Gastrocnemius medialis (tissue), 4 donors: ENCODE measurements at regions of chr6 and their contacts with region 1.

Region 1: DNA sequence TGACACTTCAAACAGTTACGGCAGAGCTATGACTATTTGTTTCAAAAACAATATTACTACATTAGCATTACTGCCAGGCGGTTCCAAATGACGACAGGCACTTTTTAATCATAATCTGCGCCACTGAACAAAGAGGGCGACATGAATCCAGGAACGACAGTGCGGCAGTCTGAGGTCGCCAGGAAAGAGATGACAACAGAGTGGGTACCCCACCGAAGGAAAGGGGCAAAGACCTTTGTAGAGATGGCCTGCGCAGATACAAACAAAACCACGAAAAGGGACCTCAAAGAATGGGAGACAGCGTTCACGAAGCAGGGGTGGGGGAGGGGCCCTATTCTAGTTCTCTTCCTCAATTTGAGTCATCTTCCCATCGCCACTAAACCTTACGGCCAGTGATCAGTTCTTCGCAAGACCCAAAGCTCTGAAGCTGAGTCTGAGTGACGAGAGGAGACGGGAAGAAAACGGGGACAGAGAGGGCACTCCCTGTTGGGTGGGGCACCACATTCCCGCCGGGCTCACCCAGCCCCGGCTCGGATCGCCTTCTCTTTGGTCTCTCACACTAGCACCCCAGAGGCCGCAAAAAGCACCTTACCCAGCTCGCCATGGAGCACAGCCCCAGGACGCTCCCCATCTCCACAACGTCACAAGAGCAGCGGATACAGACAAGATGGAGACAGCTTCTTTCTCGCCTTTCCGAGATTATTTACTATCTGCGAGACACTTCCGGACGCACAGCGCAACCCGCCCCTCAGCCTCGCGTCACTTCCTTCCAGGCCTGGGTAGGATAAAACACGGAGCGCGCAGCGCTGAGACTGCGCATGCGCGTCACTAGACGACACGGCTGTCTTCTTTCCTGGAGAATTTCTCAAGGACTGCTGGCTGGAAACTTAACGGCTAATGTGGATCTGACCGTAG is at the start of gene SERINC1:
- DNase-seq: peak; percentile 93 to 95
- ATAC-seq: peak; percentile 97
- H3K4me3 ChIP-seq: peak within 1 kb of the TSS; percentile 79 to 99 (median 90)
- H3K27ac ChIP-seq: peak within 1 kb of the TSS; percentile 94 to 99 (median 97)
- H3K4me1 ChIP-seq: peaks cover 33 to 47% of the 10 kb centered on the region in 2 donors
- H3K27me3 ChIP-seq: no peaks in the 10 kb centered on the region
- CTCF ChIP-seq: peak in 1 of 5 experiments; percentile 7
- POLR2A ChIP-seq: peak; percentile 86 to 91
- total RNA-seq, gene SERINC1: 161 to 273 (median 198) TPM

Region 2: DNA sequence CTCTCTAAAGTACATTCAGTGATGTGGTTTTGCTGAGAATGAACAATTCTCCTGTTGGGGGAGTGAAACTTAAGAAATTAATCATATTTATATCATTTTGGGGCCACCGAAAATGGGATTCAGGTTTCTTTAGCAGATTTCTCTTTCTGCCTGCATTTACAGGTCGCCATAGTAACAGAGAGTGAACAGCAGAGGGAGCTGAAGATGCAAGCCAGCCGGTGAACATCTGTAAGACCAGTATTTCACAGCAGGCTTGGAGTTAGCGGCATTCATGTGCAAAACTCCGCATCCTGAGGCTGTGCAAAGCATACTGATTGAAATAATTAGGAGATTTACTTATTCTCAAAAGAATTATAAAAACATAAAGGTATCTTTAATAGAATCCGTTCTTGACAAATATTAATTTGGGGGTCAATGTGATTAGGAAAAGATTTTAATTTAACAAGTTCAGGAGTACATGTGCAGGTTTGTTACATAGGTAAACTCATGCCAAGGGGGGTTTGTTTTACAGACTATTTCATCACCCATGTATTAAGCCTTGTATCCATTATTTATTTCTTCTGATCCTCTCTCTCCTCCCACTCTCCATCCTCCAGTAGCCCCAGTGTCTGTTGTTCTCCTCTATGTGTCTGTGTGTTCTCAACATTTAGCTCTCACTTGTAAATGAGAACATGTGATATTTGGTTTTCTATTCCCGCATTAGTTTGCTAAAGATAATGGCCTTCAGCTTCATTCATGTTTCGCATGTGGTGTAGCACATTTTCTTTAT is 89.7 kb before region 1 on chr6:
- in situ Hi-C with region 1: loop called in 2 of 4 experiments (anchors 5 to 25 kb)
- intact Hi-C with region 1: no loop called
- DNase-seq: peak; percentile 16 to 45
- ATAC-seq: peak; percentile 75 to 89
- H3K4me3 ChIP-seq: no peak overlapping the region
- H3K27ac ChIP-seq: no peak overlapping the region
- H3K4me1 ChIP-seq: no peaks in the 10 kb centered on the region
- H3K27me3 ChIP-seq: no peaks in the 10 kb centered on the region
- CTCF ChIP-seq: peak; percentile 70 to 83 (median 73)
- POLR2A ChIP-seq: no peak

Region 3: GRCh38 chr6:122416825-122417224 is 54.5 kb before region 1 on chr6:
- in situ Hi-C with region 1: no loop called
- intact Hi-C with region 1: loop called (anchors 5 kb)
- DNase-seq: peak; percentile 25 to 34
- ATAC-seq: peak; percentile 95 to 98
- H3K4me3 ChIP-seq: peak overlapping the region in 1 of 4 donors; percentile 1
- H3K27ac ChIP-seq: peak overlapping the region; percentile 76 to 100 (median 88)
- H3K4me1 ChIP-seq: peaks cover 23 to 54% of the 10 kb centered on the region in 2 donors
- H3K27me3 ChIP-seq: no peaks in the 10 kb centered on the region
- CTCF ChIP-seq: no peak
- POLR2A ChIP-seq: no peak

Region 4: DNA sequence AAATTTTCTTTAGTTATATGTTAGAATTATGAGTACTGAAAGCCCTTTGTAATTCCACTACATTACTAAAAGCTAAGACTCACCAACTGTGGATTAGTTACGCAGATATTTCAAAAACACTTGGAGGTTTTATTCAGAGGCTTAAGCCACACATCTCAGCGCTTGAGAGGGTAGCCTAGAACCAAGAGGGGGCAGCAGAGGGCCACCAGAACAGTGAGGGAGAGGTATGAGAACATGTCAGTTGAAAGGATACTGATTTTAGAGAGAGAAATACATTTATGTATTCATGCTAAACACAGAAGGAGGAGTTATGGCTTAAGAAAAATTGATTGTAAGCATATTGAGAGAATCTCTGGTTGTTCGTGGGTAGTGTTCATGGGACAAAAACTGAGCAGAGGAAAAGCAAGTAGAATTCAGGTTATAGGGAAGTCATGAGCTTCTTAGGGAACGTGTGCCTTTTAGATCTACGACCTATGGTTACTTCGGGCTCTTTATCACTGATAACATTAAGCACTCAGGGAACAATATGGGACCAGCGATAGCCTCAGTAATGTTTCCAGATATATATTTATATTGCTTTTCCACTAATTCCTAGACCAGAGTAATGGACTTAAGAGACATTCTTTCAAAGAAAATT is 20.7 kb after region 1 on chr6:
- in situ Hi-C with region 1: no loop called
- intact Hi-C with region 1: no loop called
- DNase-seq: peak; percentile 27 to 59
- ATAC-seq: peak; percentile 89 to 99
- H3K4me3 ChIP-seq: no peak overlapping the region
- H3K27ac ChIP-seq: no peak overlapping the region
- H3K4me1 ChIP-seq: no peaks in the 10 kb centered on the region
- H3K27me3 ChIP-seq: no peaks in the 10 kb centered on the region
- CTCF ChIP-seq: peak; percentile 50 to 89 (median 64)
- POLR2A ChIP-seq: no peak